K562 (cell line): ENCODE measurements at regions of chr1 and their contacts with region 1.

Region 1: GRCh38 chr1:147700042-147701006 is 30.0 kb upstream of the ACP6 start:
- DNase-seq: peak; percentile 43 to 50 (median 47)
- ATAC-seq: peak; percentile 88
- H3K4me3 ChIP-seq: no peak overlapping the region
- H3K27ac ChIP-seq: no peak overlapping the region
- H3K4me1 ChIP-seq: no peaks in the 10 kb centered on the region
- H3K27me3 ChIP-seq: peaks cover 0 to 15% of the 10 kb centered on the region in 2 experiments; a peak in 2 of 5 replicates
- CTCF ChIP-seq: peak; percentile 73 to 81 (median 73)
- EP300 ChIP-seq: no peak
- POLR2A ChIP-seq: no peak
- RAD21 ChIP-seq: peak; percentile 54 to 65

Region 2: GRCh38 chr1:147640553-147641165 is 59.7 kb before region 1 on chr1:
- CTCF ChIA-PET with region 1: no interaction called
- POLR2A ChIA-PET with region 1: no interaction called
- in situ Hi-C with region 1: no loop called
- intact Hi-C with region 1: loop called (anchors 5 kb)
- DNase-seq: peak; percentile 78 to 83 (median 80)
- ATAC-seq: peak; percentile 100
- H3K4me3 ChIP-seq: no peak overlapping the region
- H3K27ac ChIP-seq: no peak overlapping the region
- H3K4me1 ChIP-seq: peaks cover 0 to 12% of the 10 kb centered on the region in 2 experiments; a peak in 2 of 5 replicates
- H3K27me3 ChIP-seq: 0 out of 5 replicates have a peak, but pooled peaks cover 0 to 2% of the 10 kb centered on the region in 2 experiments
- CTCF ChIP-seq: peak; percentile 83 to 90 (median 83)
- EP300 ChIP-seq: no peak
- POLR2A ChIP-seq: no peak
- RAD21 ChIP-seq: peak; percentile 44 to 61; a peak in 3 of 4 replicates